ENCODE measurements at regions of chr7 and their contacts with region 1.

Region 1: DNA sequence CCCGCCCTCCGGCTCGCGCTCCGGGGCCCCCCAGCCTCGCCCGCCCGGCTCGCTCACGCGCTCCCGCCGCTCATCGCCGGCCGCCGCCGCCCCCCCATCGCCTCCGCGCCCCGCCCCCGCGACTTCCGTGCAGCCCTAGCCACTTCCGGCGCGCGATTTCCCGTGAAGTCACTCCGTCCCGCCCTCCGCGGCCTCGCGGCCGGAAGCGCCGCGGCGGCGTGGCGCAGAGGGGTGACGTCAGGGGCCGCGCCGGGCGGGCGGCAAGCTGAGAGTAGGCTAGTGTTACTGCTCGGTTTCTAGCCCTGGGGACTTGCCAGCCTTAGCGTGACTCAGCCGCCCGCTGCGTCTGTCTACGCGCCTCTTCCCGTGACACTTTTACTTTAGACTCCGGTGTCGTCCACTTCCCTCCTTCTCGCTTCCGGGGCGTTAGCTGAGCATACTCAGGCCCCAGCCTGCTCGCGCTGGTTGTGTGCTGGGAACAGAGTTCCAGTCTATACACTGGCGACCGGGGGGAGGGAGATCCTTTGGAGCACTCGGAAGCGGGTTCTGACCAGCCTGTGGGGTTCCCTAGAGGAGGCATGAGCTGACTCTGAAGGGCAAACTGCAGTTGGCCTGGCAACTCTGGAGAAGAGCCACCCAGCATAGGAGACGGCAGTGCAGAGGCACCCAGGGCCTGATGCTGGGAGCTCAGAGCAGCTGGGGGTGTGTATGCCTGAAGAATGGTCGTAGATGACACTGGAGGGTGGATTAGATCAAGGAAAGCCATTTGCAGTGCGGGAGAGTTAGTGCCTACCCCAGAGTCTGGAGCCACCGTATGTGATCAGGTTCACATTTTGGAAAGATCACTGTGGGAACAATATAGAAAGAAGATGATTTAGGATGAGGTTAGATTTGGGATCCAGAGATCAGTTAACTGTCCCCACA is at the start of gene PURB:
- DNase-seq: peak; percentile 93 to 100 (median 96)
- ATAC-seq: peak; percentile 88
- H3K4me3 ChIP-seq: peak within 1 kb of the TSS; percentile 68
- H3K4me3 Mint-ChIP-seq: peak within 1 kb of the TSS; percentile 87
- H3K27ac ChIP-seq: peak within 1 kb of the TSS; percentile 96 to 97
- H3K27ac Mint-ChIP-seq: peak within 1 kb of the TSS; percentile 100
- H3K4me1 ChIP-seq: peaks cover 32% of the 10 kb centered on the region
- H3K4me1 Mint-ChIP-seq: peaks cover 43% of the 10 kb centered on the region
- H3K27me3 ChIP-seq: no peaks in the 10 kb centered on the region
- H3K27me3 Mint-ChIP-seq: no peaks in the 10 kb centered on the region
- CTCF ChIP-seq: no peak
- total RNA-seq, gene PURB: 17.0 to 17.4 TPM

Region 2: DNA sequence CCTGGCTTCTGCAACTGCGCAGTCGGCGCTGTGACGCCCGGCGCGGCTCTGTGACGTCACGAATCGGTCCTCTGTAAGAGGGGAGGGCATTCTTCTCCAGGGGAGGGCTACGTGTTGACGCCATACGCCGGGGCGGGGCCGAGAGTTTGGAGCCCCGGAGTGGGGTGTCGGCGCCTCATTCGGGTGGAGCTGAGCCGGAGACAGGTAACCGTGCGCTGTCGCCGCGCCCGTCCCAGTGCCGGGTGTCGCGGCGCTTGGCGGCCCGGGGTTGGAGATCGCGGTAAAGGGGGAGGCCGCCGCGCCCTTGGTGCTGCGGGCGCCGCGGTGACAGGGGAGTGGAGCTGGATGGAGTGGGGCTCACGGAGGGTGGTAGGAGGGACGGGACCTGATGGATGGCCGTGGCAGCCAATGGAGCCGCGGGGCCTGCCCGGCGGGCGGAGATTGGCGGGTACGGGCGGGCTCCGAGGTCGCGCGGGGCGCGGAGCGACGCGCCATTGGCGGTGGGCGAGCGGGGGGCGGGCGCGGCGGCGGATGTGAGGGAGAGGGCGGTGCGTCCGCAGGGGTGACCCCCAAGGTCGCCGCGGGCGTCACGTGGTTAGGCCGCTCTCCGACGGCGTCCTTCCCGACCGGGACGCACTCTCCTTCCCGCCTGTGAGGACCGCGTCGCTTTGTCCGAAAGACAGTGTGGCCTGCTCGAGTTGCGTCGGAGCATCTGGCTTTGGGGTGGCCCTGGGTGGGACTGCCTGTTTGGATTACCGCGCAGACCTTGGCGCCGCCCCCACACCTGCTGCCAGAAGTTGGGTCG is 279.0 kb before region 1 on chr7 and contains the start of gene OGDH:
- CTCF ChIA-PET with region 1: no interaction called
- POLR2A ChIA-PET with region 1: interaction called, 38 read pairs
- intact Hi-C with region 1: loop called in 1 of 2 experiments (anchors 5 kb)
- DNase-seq: peak; percentile 97 to 100 (median 99)
- ATAC-seq: peak; percentile 91
- H3K4me3 ChIP-seq: peak within 1 kb of the TSS; percentile 69
- H3K4me3 Mint-ChIP-seq: peak within 1 kb of the TSS; percentile 100
- H3K27ac ChIP-seq: peak within 1 kb of the TSS; percentile 86 to 99
- H3K27ac Mint-ChIP-seq: peak within 1 kb of the TSS; percentile 100
- H3K4me1 ChIP-seq: peaks cover 43% of the 10 kb centered on the region
- H3K4me1 Mint-ChIP-seq: peaks cover 44% of the 10 kb centered on the region
- H3K27me3 ChIP-seq: no peaks in the 10 kb centered on the region
- H3K27me3 Mint-ChIP-seq: peaks cover 5% of the 10 kb centered on the region
- CTCF ChIP-seq: no peak
- total RNA-seq, gene OGDH: 39.8 to 43.8 TPM

Region 3: GRCh38 chr7:44858161-44858560 is 27.5 kb before region 1 on chr7:
- CTCF ChIA-PET with region 1: interaction called, 24 read pairs
- POLR2A ChIA-PET with region 1: interaction called, 20 read pairs
- intact Hi-C with region 1: loop called (anchors 2 kb)
- DNase-seq: no peak
- ATAC-seq: no peak
- H3K4me3 ChIP-seq: no peak overlapping the region
- H3K4me3 Mint-ChIP-seq: no peak overlapping the region
- H3K27ac ChIP-seq: no peak overlapping the region
- H3K27ac Mint-ChIP-seq: no peak overlapping the region
- H3K4me1 ChIP-seq: peaks cover 6% of the 10 kb centered on the region
- H3K4me1 Mint-ChIP-seq: peaks cover 6% of the 10 kb centered on the region
- H3K27me3 ChIP-seq: no peaks in the 10 kb centered on the region
- H3K27me3 Mint-ChIP-seq: peaks cover 5% of the 10 kb centered on the region
- CTCF ChIP-seq: no peak

Region 4: DNA sequence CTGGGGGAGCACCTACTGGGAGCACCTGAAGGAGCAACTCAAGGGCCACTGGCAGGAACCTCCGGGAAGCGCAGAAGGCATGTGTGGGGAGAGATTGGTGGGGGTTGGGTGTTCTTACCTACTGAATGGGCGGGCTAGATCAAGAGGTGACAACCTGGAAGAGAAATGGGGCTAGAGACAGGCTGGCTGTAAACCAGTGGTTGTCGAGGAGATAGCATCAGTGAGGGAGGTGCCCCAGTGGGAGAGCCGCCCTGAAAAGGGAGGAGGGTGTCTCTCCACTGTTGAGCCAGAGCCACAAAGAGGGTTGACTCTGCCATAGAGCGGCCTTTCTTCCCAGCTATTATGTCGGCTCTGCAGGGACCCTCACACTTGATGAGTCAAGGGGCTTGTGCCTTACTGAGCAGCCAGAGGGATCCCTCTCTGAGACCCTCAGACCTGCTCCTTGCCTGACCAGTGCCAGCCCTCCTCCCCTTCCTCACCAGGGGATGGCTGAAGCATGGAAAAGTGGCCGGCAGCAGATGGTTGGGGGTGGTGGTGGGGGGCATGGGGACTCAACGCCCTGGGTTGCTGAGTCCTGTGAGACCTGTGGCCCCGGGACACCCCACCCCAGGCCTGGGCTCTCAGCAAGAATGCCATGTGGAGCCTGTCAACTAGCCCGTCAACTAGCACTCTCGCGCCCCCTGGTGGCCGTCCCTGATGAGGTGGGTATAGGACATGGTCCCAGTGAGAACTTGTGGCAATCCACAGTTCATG is 36.1 kb after region 1 on chr7:
- CTCF ChIA-PET with region 1: interaction called, 11 read pairs
- POLR2A ChIA-PET with region 1: interaction called, 5 read pairs
- intact Hi-C with region 1: loop called in 1 of 2 experiments (anchors 2 kb)
- DNase-seq: peak; percentile 88 to 98 (median 94)
- ATAC-seq: peak; percentile 98
- H3K4me3 ChIP-seq: no peak overlapping the region
- H3K4me3 Mint-ChIP-seq: no peak overlapping the region
- H3K27ac ChIP-seq: no peak overlapping the region
- H3K27ac Mint-ChIP-seq: no peak overlapping the region
- H3K4me1 ChIP-seq: peaks cover 9% of the 10 kb centered on the region
- H3K4me1 Mint-ChIP-seq: peaks cover 4% of the 10 kb centered on the region
- H3K27me3 ChIP-seq: no peaks in the 10 kb centered on the region
- H3K27me3 Mint-ChIP-seq: peaks cover 1% of the 10 kb centered on the region
- CTCF ChIP-seq: peak; percentile 85

Region 5: DNA sequence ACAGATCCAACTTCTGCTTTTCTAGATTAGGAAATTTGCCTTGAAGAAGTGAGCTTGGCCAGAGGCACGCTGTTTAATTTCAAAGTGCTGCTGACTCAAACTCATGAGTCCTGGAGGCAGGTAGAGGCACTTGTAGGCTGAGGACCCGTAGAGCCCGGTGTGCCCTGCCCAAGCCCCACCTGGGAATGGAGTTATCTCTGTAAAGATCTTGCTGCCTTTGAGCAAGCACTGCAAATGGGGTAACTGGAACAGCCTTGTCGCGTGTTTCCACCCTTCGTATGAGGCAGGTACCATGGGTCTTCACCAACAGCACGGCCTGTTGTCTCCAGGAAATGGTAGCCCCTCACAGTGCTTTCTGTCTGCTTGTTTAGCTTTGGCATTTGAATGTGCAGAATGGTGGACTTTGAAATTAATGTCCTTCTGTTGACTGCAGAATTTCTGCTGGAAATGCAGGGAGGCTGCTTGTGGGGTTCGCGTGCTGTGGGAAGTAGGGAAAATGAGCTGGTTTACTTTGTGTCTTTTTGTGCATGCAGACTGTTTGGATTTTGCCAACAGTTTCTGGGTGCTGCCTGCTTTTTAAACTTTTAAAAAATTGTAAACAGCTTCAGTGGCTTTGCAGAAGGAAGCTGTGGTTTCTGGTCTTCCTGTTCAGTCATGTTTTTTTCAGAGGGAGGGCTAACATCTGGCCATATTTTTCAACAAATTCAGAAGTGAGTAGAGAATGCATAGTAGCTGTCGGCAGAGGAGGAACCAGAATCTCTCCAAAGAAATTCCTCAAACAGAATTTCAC is 141.5 kb after region 1 on chr7:
- CTCF ChIA-PET with region 1: no interaction called
- POLR2A ChIA-PET with region 1: interaction called, 19 read pairs
- intact Hi-C with region 1: no loop called
- DNase-seq: peak in 11 of 14 experiments; percentile 13 to 82 (median 36)
- ATAC-seq: peak; percentile 57
- H3K4me3 ChIP-seq: peak overlapping the region; percentile 96
- H3K4me3 Mint-ChIP-seq: peak overlapping the region; percentile 94
- H3K27ac ChIP-seq: peak overlapping the region; percentile 82 to 83
- H3K27ac Mint-ChIP-seq: peak overlapping the region; percentile 95
- H3K4me1 ChIP-seq: peaks cover 56% of the 10 kb centered on the region
- H3K4me1 Mint-ChIP-seq: peaks cover 67% of the 10 kb centered on the region
- H3K27me3 ChIP-seq: no peaks in the 10 kb centered on the region
- H3K27me3 Mint-ChIP-seq: no peaks in the 10 kb centered on the region
- CTCF ChIP-seq: no peak

Measured in CD4-positive, alpha-beta T cell (primary cell).